ENCODE measurements at regions of chr10 and their contacts with region 1.

Region 1: DNA sequence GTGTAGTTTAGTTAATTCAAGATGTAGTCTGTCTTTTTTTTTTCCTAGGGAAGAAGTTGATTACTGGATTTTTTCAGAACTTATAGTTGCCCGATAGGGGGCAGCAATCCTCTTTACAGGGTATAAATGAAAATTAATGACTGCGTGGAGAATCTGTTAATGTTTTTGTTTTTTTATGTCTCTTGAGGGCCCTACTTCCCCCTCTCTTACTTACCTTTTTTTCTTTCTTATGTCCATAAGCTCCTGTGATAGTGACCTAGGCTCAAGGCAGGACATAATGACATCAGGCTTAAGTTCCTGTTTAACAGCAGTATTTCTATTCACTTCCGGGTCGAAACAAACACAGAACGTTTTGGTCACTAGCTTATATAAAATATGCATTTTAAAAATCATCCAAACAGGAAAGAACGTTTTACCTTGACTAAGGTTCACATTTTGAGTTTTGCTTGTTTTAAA is 18.8 kb downstream of the CDC123 start:
- DNase-seq: peak; percentile 65
- ATAC-seq: peak; percentile 42
- H3K4me3 Mint-ChIP-seq: peak overlapping the region; percentile 34
- H3K27ac Mint-ChIP-seq: peak overlapping the region; percentile 85
- H3K4me1 Mint-ChIP-seq: peaks cover 14% of the 10 kb centered on the region
- H3K27me3 Mint-ChIP-seq: no peaks in the 10 kb centered on the region

Region 2: GRCh38 chr10:11742005-11742778 is 472.6 kb before region 1 on chr10 and contains the start of gene ECHDC3:
- CTCF ChIA-PET with region 1: no interaction called
- POLR2A ChIA-PET with region 1: no interaction called
- DNase-seq: peak; percentile 59
- ATAC-seq: peak; percentile 94
- H3K4me3 Mint-ChIP-seq: peak within 1 kb of the TSS; percentile 71
- H3K27ac Mint-ChIP-seq: no peak within 1 kb of the TSS
- H3K4me1 Mint-ChIP-seq: peaks cover 4% of the 10 kb centered on the region
- H3K27me3 Mint-ChIP-seq: peaks cover 34% of the 10 kb centered on the region
- total RNA-seq, gene ECHDC3: 1.2 to 1.4 TPM

Region 3: DNA sequence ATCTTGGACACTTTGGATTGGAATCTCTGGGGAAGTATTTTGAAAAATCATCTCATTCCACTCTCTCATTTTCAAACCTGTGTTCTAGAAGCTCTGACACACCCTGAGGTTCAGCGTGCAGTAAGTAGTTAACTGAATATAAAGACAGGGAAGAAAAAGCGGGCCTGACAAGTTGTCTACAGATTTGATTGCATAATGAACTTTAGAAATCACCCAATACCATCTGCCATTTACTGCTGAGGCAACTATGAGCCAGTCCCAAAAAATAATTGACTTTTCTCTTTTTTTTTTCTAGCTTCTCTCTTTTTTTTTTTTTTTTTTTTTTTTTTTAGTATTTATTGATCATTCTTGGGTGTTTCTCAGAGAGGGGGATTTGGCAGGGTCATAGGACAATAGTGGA is 10.7 kb after region 1 on chr10:
- CTCF ChIA-PET with region 1: interaction called, 21 read pairs
- POLR2A ChIA-PET with region 1: no interaction called
- DNase-seq: no peak
- ATAC-seq: no peak
- H3K4me3 Mint-ChIP-seq: no peak overlapping the region
- H3K27ac Mint-ChIP-seq: no peak overlapping the region
- H3K4me1 Mint-ChIP-seq: peaks cover 2% of the 10 kb centered on the region
- H3K27me3 Mint-ChIP-seq: no peaks in the 10 kb centered on the region

Region 4: GRCh38 chr10:12279281-12279680 is 64.5 kb after region 1 on chr10:
- CTCF ChIA-PET with region 1: no interaction called
- POLR2A ChIA-PET with region 1: no interaction called
- DNase-seq: no peak
- ATAC-seq: no peak
- H3K4me3 Mint-ChIP-seq: no peak overlapping the region
- H3K27ac Mint-ChIP-seq: no peak overlapping the region
- H3K4me1 Mint-ChIP-seq: peaks cover 2% of the 10 kb centered on the region
- H3K27me3 Mint-ChIP-seq: peaks cover 2% of the 10 kb centered on the region

Region 5: GRCh38 chr10:12299222-12299965 is 84.6 kb after region 1 on chr10:
- CTCF ChIA-PET with region 1: no interaction called
- POLR2A ChIA-PET with region 1: no interaction called
- DNase-seq: no peak
- ATAC-seq: no peak
- H3K4me3 Mint-ChIP-seq: no peak overlapping the region
- H3K27ac Mint-ChIP-seq: no peak overlapping the region
- H3K4me1 Mint-ChIP-seq: no peaks in the 10 kb centered on the region
- H3K27me3 Mint-ChIP-seq: no peaks in the 10 kb centered on the region